ENCODE measurements at regions of chr6 and their contacts with region 1.

Region 1: DNA sequence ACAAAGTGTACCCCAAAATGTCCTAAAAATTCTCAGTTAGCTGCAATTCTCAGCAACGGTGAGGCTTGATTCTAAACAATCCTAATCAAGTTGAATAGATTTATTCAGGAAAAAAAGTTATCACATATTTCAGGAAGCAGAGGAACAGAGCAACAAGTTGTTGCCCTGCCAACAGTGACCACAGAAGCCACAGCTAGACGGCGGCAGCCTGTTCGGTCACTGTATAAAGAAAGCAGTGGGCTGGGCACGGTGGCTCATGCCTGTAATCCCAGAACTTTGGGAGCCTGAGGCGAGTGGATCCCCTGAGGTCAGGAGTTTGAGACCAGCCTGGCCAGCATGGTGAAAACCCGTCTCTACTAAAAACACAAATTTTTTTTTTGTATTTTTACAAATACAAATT is 171.2 kb upstream of the BMP5 start:
- DNase-seq: peak; percentile 36 to 86
- H3K4me3 ChIP-seq: no peak overlapping the region
- H3K27ac ChIP-seq: peak overlapping the region in 1 of 2 donors; percentile 27
- H3K4me1 ChIP-seq: peaks cover 0 to 5% of the 10 kb centered on the region in 2 donors
- H3K27me3 ChIP-seq: no peaks in the 10 kb centered on the region
- CTCF ChIP-seq: no peak

Region 2: GRCh38 chr6:55913213-55914195 is 133.1 kb before region 1 on chr6:
- intact Hi-C with region 1: no loop called
- DNase-seq: no peak
- H3K4me3 ChIP-seq: no peak overlapping the region
- H3K27ac ChIP-seq: no peak overlapping the region
- H3K4me1 ChIP-seq: no peaks in the 10 kb centered on the region
- H3K27me3 ChIP-seq: no peaks in the 10 kb centered on the region
- CTCF ChIP-seq: no peak

Region 3: DNA sequence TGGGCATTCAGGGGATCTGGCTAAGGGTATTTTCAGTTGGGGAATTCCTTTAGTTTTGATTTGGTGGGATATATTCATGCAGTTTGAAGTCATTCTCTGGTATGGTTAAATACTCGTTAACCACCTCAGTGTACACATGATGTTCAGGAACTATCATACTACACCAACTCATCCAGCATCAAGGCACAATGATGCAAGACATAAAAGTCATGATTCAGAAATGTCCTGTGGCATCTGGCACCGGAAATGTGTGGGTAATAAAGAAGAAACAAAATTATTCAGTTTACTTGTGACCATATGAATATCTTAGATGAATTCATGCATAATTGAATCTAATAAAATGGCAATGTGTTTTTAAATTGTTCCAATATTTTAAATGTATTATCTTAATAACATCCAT is 42.1 kb before region 1 on chr6:
- intact Hi-C with region 1: no loop called
- DNase-seq: no peak
- H3K4me3 ChIP-seq: no peak overlapping the region
- H3K27ac ChIP-seq: no peak overlapping the region
- H3K4me1 ChIP-seq: no peaks in the 10 kb centered on the region
- H3K27me3 ChIP-seq: no peaks in the 10 kb centered on the region
- CTCF ChIP-seq: no peak

Region 4: DNA sequence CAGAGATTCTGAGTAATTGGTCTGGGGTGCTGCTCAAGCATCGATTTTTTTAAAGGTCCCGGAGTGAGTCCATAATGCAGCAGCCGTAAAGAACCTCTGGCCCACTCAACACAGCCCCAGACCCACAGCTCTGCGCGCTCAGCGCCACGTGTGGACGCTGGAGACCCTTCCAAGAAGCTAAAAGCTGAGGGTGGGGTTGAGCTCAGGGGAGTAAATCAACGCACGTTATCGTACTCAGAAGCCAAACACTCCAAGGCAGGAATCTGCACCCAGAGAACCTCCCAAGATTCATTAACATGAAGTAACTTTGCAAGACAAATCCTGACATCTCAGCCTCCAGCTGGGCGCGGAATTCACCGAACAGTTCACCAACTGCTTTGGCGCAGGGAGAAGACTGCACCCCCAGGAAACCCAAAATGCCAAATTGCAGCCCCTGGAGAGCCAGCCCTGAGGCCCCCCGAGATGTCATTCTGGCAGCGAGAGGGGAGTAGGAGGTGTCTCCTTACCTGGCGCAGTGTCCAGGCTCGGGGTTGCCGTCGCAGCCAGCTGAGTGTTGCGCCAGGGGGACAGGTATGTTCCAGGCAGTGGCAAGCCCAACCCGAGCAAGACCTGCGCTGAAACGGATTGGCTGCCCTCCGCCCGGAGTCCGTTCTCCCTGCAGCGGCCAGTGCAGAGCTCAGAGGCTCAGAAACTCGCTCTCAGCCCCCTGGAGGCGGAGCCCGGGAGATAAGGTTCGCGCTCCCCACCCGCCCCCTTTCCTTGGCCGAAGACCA is 200.5 kb after region 1 on chr6 and contains the start of gene COL21A1:
- intact Hi-C with region 1: loop called (anchors 5 kb)
- DNase-seq: peak; percentile 10 to 90
- H3K4me3 ChIP-seq: peak within 1 kb of the TSS; percentile 56 to 81
- H3K27ac ChIP-seq: peak within 1 kb of the TSS; percentile 84 to 88
- H3K4me1 ChIP-seq: peaks cover 0 to 17% of the 10 kb centered on the region in 2 donors
- H3K27me3 ChIP-seq: no peaks in the 10 kb centered on the region
- CTCF ChIP-seq: peak in 2 of 3 experiments; percentile 36 to 51
- total RNA-seq, gene COL21A1: 24.5 TPM